ENCODE measurements at regions of chr18 and their contacts with region 1.

Region 1: GRCh38 chr18:54357660-54358494 is at the starts of genes C18orf54 and STARD6:
- DNase-seq: peak; percentile 93
- ATAC-seq: peak; percentile 96
- H3K4me3 Mint-ChIP-seq: peak within 1 kb of the TSS; percentile 99
- H3K27ac Mint-ChIP-seq: peak within 1 kb of the TSS; percentile 98
- H3K4me1 Mint-ChIP-seq: peaks cover 18% of the 10 kb centered on the region
- H3K27me3 Mint-ChIP-seq: peaks cover 7% of the 10 kb centered on the region
- total RNA-seq, gene C18orf54: 8.0 to 8.5 TPM
- total RNA-seq, gene STARD6: not detected

Region 2: GRCh38 chr18:54224379-54225014 is 133.4 kb before region 1 on chr18 and contains the start of gene MBD2:
- POLR2A ChIA-PET with region 1: interaction called, 16 read pairs
- DNase-seq: peak; percentile 97
- ATAC-seq: peak; percentile 95
- H3K4me3 Mint-ChIP-seq: peak within 1 kb of the TSS; percentile 96
- H3K27ac Mint-ChIP-seq: peak within 1 kb of the TSS; percentile 98
- H3K4me1 Mint-ChIP-seq: peaks cover 33% of the 10 kb centered on the region
- H3K27me3 Mint-ChIP-seq: peaks cover 2% of the 10 kb centered on the region
- total RNA-seq, gene MBD2: 96.3 to 104 TPM

Region 3: DNA sequence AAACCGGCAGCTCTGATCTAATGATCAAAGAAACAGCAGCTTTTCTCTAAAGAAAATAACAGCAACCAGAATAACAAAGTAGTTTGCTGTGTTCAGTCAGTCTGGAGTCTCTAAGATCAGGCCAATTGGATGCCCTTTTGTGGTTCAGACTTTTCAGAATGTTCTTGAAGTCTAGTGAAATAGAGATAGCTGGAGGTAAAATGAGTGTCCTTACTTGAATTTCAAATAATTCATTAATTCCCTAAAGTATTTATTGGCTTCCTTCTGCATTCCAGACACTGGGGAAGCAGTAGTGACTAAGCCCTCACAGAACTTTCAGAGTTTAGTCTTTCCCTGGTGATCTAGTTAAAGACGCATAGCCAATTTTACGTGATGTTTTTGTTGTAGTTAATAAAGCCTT is 58.6 kb after region 1 on chr18:
- POLR2A ChIA-PET with region 1: no interaction called
- DNase-seq: no peak
- ATAC-seq: no peak
- H3K4me3 Mint-ChIP-seq: no peak overlapping the region
- H3K27ac Mint-ChIP-seq: no peak overlapping the region
- H3K4me1 Mint-ChIP-seq: no peaks in the 10 kb centered on the region
- H3K27me3 Mint-ChIP-seq: peaks cover 3% of the 10 kb centered on the region

Measured in activated naive CD8-positive, alpha-beta T cell treated with anti-CD3 and anti-CD28 coated beads, Interleukin-2, amount 10 ng/mL, durations not matched to agents 7 days and 5 days (primary cell).